ENCODE measurements at regions of chr1 and their contacts with region 1.

Region 1: DNA sequence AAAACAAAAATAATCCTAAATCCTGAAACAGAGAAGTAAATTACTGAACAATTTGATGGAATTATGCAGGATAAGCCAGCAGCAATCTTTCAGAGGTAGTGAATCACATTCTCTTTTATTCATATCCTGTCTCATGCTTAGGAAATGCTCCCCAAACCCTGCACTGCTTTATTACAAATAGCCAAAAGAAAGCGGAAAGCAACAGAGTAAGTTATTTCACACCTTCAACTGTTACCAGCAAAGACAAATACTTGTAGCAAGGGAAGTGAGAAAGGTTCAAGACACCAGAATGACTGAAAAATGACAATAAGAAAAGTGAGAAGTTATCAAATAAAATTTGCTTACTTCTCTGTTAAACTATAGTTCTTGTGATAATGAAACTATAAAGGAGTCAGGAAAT is 6.2 kb downstream of the ZRANB2 start:
- DNase-seq: no peak
- ATAC-seq: no peak
- H3K4me3 ChIP-seq: no peak overlapping the region
- H3K27ac ChIP-seq: no peak overlapping the region
- H3K4me1 ChIP-seq: peaks cover 0 to 23% (median 14%) of the 10 kb centered on the region in 12 donors
- H3K27me3 ChIP-seq: no peaks in the 10 kb centered on the region
- CTCF ChIP-seq: no peak
- POLR2A ChIP-seq: no peak

Region 2: GRCh38 chr1:70239940-70240339 is 834.7 kb before region 1 on chr1:
- intact Hi-C with region 1: loop called in 1 of 10 experiments (anchors 5 kb)
- DNase-seq: no peak
- ATAC-seq: no peak
- H3K4me3 ChIP-seq: no peak overlapping the region
- H3K27ac ChIP-seq: no peak overlapping the region
- H3K4me1 ChIP-seq: no peaks in the 10 kb centered on the region
- H3K27me3 ChIP-seq: no peaks in the 10 kb centered on the region
- CTCF ChIP-seq: no peak
- POLR2A ChIP-seq: no peak

Region 3: GRCh38 chr1:71269818-71270217 is 195.1 kb after region 1 on chr1:
- intact Hi-C with region 1: no loop called
- DNase-seq: no peak
- ATAC-seq: no peak
- H3K4me3 ChIP-seq: no peak overlapping the region
- H3K27ac ChIP-seq: no peak overlapping the region
- H3K4me1 ChIP-seq: no peaks in the 10 kb centered on the region
- H3K27me3 ChIP-seq: no peaks in the 10 kb centered on the region
- CTCF ChIP-seq: no peak
- POLR2A ChIP-seq: no peak

Measured in heart left ventricle (tissue), 16 donors.